B cell (primary cell): ENCODE measurements at regions of chr14 and their contacts with region 1.

Region 1: DNA sequence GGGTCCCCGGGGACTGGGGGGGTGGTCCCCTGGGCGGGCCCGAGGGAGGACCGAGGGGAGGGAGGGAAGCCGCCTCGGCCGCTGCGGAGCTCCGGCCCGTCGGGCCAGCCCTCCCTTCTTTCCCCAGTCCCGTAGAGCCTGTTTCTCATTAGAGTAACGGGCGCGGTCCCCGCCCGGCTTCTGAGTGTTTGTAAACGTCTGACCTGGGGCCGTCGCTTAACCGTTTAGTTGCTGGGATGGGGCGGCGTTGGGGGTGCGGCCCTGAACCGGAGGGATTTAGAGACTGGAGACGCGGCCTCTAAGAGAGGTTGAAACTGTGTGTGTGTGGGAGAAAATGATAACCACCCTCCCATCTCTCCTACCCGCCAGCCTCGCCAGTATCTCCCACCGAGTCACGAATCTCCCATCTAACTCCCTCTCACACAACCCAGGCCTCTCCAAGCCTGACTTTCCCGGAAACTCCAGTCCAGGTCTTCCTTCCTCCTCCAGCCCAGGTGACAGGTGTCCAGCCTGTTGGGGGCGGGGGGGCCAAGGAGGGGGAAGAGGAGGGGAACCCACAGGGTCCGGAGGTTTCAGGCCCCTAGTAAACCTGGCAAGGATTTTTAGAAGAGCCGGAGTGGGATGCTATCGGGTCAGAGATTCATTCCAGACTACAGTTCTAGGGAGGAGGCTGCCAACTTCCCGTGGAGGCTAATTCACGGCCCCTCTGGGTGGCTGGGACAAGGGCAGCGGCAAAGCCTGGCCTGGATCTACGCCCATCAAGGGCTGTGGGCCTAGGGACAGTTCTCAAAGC is 1.1 kb upstream of the NFATC4 start:
- DNase-seq: peak; percentile 94
- ATAC-seq: peak; percentile 85
- H3K4me3 ChIP-seq: peak overlapping the region in 4 of 5 experiments; percentile 52 to 64 (median 60)
- H3K4me3 Mint-ChIP-seq: peak overlapping the region; percentile 92
- H3K27ac ChIP-seq: peak overlapping the region; percentile 59 to 70
- H3K27ac Mint-ChIP-seq: peak overlapping the region; percentile 92
- H3K4me1 ChIP-seq: peaks cover 30 to 39% of the 10 kb centered on the region in 2 donors
- H3K4me1 Mint-ChIP-seq: peaks cover 32% of the 10 kb centered on the region
- H3K27me3 ChIP-seq: peaks cover 0 to 32% (median 6%) of the 10 kb centered on the region in 4 experiments
- H3K27me3 Mint-ChIP-seq: peaks cover 10% of the 10 kb centered on the region
- CTCF ChIP-seq: no peak

Region 2: GRCh38 chr14:23539248-23540140 is 827.4 kb before region 1 on chr14:
- CTCF ChIA-PET with region 1: no interaction called
- POLR2A ChIA-PET with region 1: no interaction called
- intact Hi-C with region 1: no loop called
- DNase-seq: peak; percentile 55
- ATAC-seq: peak; percentile 74
- H3K4me3 ChIP-seq: no peak overlapping the region
- H3K4me3 Mint-ChIP-seq: no peak overlapping the region
- H3K27ac ChIP-seq: no peak overlapping the region
- H3K27ac Mint-ChIP-seq: no peak overlapping the region
- H3K4me1 ChIP-seq: no peaks in the 10 kb centered on the region
- H3K4me1 Mint-ChIP-seq: no peaks in the 10 kb centered on the region
- H3K27me3 ChIP-seq: peaks cover 0 to 5% (median 0%) of the 10 kb centered on the region in 4 experiments
- H3K27me3 Mint-ChIP-seq: peaks cover 3% of the 10 kb centered on the region
- CTCF ChIP-seq: peak; percentile 78

Region 3: GRCh38 chr14:23621204-23621931 is 745.5 kb before region 1 on chr14:
- CTCF ChIA-PET with region 1: no interaction called
- POLR2A ChIA-PET with region 1: no interaction called
- intact Hi-C with region 1: no loop called
- DNase-seq: no peak
- ATAC-seq: no peak
- H3K4me3 ChIP-seq: no peak overlapping the region
- H3K4me3 Mint-ChIP-seq: no peak overlapping the region
- H3K27ac ChIP-seq: no peak overlapping the region
- H3K27ac Mint-ChIP-seq: no peak overlapping the region
- H3K4me1 ChIP-seq: no peaks in the 10 kb centered on the region
- H3K4me1 Mint-ChIP-seq: no peaks in the 10 kb centered on the region
- H3K27me3 ChIP-seq: peaks cover 0 to 3% (median 0%) of the 10 kb centered on the region in 4 experiments
- H3K27me3 Mint-ChIP-seq: peaks cover 30% of the 10 kb centered on the region
- CTCF ChIP-seq: no peak

Region 4: GRCh38 chr14:24141097-24141880 is 225.6 kb before region 1 on chr14 and contains the start of gene EMC9:
- CTCF ChIA-PET with region 1: no interaction called
- POLR2A ChIA-PET with region 1: no interaction called
- intact Hi-C with region 1: loop called (anchors 5 kb)
- DNase-seq: peak; percentile 99
- ATAC-seq: peak; percentile 89
- H3K4me3 ChIP-seq: peak within 1 kb of the TSS; percentile 67 to 93 (median 82)
- H3K4me3 Mint-ChIP-seq: peak within 1 kb of the TSS; percentile 96
- H3K27ac ChIP-seq: peak within 1 kb of the TSS; percentile 63 to 80
- H3K27ac Mint-ChIP-seq: peak within 1 kb of the TSS; percentile 95
- H3K4me1 ChIP-seq: peaks cover 33 to 50% of the 10 kb centered on the region in 2 donors
- H3K4me1 Mint-ChIP-seq: peaks cover 64% of the 10 kb centered on the region
- H3K27me3 ChIP-seq: no peaks in the 10 kb centered on the region
- H3K27me3 Mint-ChIP-seq: no peaks in the 10 kb centered on the region
- CTCF ChIP-seq: peak; percentile 37
- total RNA-seq, gene EMC9: 24.7 and 26.4 TPM in 2 replicates

Region 5: DNA sequence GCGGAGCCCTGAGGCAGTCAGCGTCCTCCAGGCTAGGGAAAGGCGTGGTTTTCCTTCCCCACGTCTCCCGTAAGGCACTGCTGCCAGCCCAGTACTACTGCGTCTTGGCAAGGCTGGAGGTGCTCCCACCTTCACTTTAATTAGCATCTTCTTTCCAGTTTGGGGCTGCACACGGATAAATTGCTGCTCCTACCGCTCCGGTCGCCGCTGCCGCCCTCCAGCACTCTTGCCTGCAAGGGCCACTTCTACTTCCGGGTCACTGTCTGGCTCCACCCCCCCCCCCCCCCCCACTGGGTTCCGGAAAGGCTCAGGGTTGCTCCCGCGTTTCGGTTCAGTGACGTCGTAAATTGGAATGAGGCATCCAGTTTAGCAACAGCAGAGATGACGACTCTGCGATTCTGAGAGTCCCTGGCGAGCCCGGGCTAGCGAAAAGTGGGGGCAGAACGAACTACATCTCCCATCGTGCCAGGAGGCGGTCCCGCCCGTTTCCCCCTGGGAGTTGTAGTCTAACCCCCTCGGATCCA is 134.7 kb before region 1 on chr14 and contains the start of gene NEDD8:
- CTCF ChIA-PET with region 1: no interaction called
- POLR2A ChIA-PET with region 1: no interaction called
- intact Hi-C with region 1: no loop called
- DNase-seq: peak; percentile 95
- ATAC-seq: peak; percentile 86
- H3K4me3 ChIP-seq: peak within 1 kb of the TSS; percentile 75 to 100 (median 97)
- H3K4me3 Mint-ChIP-seq: peak within 1 kb of the TSS; percentile 96
- H3K27ac ChIP-seq: peak within 1 kb of the TSS; percentile 36 to 67
- H3K27ac Mint-ChIP-seq: peak within 1 kb of the TSS; percentile 95
- H3K4me1 ChIP-seq: peaks cover 18 to 24% of the 10 kb centered on the region in 2 donors
- H3K4me1 Mint-ChIP-seq: peaks cover 55% of the 10 kb centered on the region
- H3K27me3 ChIP-seq: no peaks in the 10 kb centered on the region
- H3K27me3 Mint-ChIP-seq: no peaks in the 10 kb centered on the region
- CTCF ChIP-seq: no peak
- total RNA-seq, gene NEDD8: 86.6 and 98.5 TPM in 2 replicates

Region 6: DNA sequence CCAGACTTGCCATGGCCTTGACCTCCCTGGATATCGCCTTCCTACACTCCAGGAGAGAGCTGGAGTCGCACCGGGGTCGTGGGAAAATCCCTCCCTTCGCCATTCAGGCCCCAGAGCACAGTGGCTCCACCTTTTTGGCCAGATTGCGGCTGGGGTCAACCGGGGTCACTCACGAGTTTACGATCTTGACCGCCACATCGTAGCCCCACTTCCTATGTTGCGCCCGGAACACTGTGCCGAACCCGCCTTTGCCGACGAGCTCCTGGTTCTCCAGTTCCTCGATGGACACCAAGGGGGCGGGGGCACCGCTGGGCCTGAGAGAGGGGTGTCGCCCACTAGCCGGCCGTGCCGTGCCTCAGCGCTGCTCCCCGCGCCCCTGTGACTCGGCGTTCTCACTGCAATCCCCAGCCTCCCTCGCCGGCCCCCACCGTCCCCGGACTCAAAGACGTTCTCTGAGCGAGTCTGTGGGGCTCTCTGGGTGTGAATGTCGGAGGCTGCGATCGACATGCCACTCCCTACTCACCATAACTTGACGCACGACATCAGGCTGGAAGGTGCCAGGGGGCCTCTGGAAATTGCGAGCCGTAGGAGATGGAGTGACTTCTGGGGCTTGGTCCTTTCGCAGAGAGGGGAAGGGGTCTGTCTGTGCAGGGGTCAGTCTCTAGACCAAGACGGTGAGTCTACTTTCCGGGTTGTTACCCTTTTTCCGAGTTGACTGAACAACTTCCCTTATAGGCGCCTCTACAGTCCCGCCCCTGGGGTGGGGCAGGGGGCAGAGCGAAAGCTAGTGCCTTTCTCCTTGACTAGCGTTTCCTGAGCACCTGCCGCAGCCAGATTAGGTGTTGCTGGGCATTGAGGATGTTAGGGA is 27.4 kb before region 1 on chr14 and contains the start of gene RIPK3:
- CTCF ChIA-PET with region 1: interaction called, 47 read pairs
- POLR2A ChIA-PET with region 1: interaction called, 5 read pairs
- intact Hi-C with region 1: loop called (anchors 2 kb)
- DNase-seq: peak; percentile 79
- ATAC-seq: peak; percentile 96
- H3K4me3 ChIP-seq: peak within 1 kb of the TSS; percentile 85 to 98 (median 89)
- H3K4me3 Mint-ChIP-seq: peak within 1 kb of the TSS; percentile 99
- H3K27ac ChIP-seq: peak within 1 kb of the TSS; percentile 65 to 73
- H3K27ac Mint-ChIP-seq: peak within 1 kb of the TSS; percentile 98
- H3K4me1 ChIP-seq: peaks cover 25 to 33% of the 10 kb centered on the region in 2 donors
- H3K4me1 Mint-ChIP-seq: peaks cover 32% of the 10 kb centered on the region
- H3K27me3 ChIP-seq: peaks cover 0 to 21% (median 4%) of the 10 kb centered on the region in 4 experiments
- H3K27me3 Mint-ChIP-seq: peaks cover 12% of the 10 kb centered on the region
- CTCF ChIP-seq: no peak
- total RNA-seq, gene RIPK3: 76.6 and 77.6 TPM in 2 replicates

Region 7: GRCh38 chr14:24411443-24412389 is 44.8 kb after region 1 on chr14:
- CTCF ChIA-PET with region 1: interaction called, 55 read pairs
- POLR2A ChIA-PET with region 1: no interaction called
- intact Hi-C with region 1: loop called (anchors 1 kb)
- DNase-seq: peak; percentile 67
- ATAC-seq: peak; percentile 87
- H3K4me3 ChIP-seq: no peak overlapping the region
- H3K4me3 Mint-ChIP-seq: no peak overlapping the region
- H3K27ac ChIP-seq: no peak overlapping the region
- H3K27ac Mint-ChIP-seq: no peak overlapping the region
- H3K4me1 ChIP-seq: no peaks in the 10 kb centered on the region
- H3K4me1 Mint-ChIP-seq: no peaks in the 10 kb centered on the region
- H3K27me3 ChIP-seq: peaks cover 0 to 18% (median 4%) of the 10 kb centered on the region in 4 experiments
- H3K27me3 Mint-ChIP-seq: peaks cover 14% of the 10 kb centered on the region
- CTCF ChIP-seq: peak; percentile 72

Region 8: DNA sequence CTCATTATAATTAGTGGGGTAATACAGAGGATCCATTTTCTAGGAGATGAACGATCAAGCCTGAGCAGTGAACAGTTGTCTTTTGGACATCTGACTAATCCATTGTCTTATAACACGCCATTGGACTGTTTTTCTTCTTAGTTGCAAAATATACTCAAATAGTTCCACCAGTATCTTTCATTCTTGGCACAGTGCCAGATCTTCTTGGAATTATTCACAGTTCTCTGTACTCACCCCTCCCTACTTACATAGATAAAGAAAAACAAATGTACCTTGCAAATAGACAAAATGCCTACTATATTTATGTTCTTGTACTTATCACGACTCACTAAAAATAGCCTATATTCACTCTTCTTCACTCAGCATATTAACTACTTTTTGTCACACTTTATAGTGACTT is 58.8 kb after region 1 on chr14:
- CTCF ChIA-PET with region 1: interaction called, 148 read pairs
- POLR2A ChIA-PET with region 1: interaction called, 78 read pairs
- intact Hi-C with region 1: no loop called
- DNase-seq: no peak
- ATAC-seq: no peak
- H3K4me3 ChIP-seq: no peak overlapping the region
- H3K4me3 Mint-ChIP-seq: no peak overlapping the region
- H3K27ac ChIP-seq: no peak overlapping the region
- H3K27ac Mint-ChIP-seq: no peak overlapping the region
- H3K4me1 ChIP-seq: peaks cover 16 to 30% of the 10 kb centered on the region in 2 donors
- H3K4me1 Mint-ChIP-seq: peaks cover 13% of the 10 kb centered on the region
- H3K27me3 ChIP-seq: peaks cover 0 to 3% (median 0%) of the 10 kb centered on the region in 4 experiments
- H3K27me3 Mint-ChIP-seq: peaks cover 5% of the 10 kb centered on the region
- CTCF ChIP-seq: no peak

Region 9: DNA sequence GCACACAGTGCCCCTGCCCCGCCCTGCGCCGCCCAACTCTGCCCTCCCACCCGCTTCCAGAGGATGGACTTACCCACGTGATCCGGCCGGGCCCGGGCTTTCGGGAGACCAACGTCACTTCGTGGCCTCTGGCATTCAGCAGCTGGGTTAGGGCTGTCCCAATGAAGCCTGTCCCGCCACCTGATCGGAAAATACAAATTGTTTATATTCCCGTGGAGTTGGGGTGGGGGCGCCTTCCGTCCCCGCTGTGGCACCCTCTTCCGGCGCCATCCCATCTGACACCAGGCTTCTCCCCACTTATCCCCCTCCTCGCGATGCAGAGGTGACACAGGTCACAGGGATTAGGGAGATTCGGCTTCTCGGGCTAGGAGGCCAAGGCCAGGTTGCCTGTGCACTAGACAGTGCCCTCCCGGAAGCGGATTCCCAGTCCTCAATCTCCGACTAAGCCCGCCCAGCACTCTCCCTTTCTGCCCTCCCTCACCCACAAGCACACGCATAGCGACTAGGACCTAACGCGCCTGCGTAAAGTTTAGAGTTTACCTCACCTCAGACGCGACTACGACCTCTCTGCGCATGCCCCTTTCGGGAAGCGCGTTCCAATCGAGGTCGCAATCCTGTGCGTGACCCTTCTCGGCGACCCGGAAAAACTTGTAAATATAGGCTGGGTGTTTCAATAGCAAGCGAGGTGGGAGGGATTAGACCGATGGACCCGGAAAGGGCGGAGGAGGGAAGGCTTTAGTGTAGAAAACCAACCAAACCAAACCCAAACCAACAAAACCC is 75.5 kb after region 1 on chr14 and contains the start of gene SDR39U1:
- CTCF ChIA-PET with region 1: interaction called, 49 read pairs
- POLR2A ChIA-PET with region 1: no interaction called
- intact Hi-C with region 1: loop called (anchors 1 kb)
- DNase-seq: peak; percentile 99
- ATAC-seq: peak; percentile 89
- H3K4me3 ChIP-seq: peak within 1 kb of the TSS; percentile 86 to 98 (median 94)
- H3K4me3 Mint-ChIP-seq: peak within 1 kb of the TSS; percentile 97
- H3K27ac ChIP-seq: peak within 1 kb of the TSS; percentile 96
- H3K27ac Mint-ChIP-seq: peak within 1 kb of the TSS; percentile 98
- H3K4me1 ChIP-seq: peaks cover 20 to 29% of the 10 kb centered on the region in 2 donors
- H3K4me1 Mint-ChIP-seq: peaks cover 48% of the 10 kb centered on the region
- H3K27me3 ChIP-seq: no peaks in the 10 kb centered on the region
- H3K27me3 Mint-ChIP-seq: no peaks in the 10 kb centered on the region
- CTCF ChIP-seq: no peak
- total RNA-seq, gene SDR39U1: 107 and 126 TPM in 2 replicates

Region 10: GRCh38 chr14:24678801-24679247 is 311.9 kb after region 1 on chr14:
- CTCF ChIA-PET with region 1: no interaction called
- POLR2A ChIA-PET with region 1: no interaction called
- intact Hi-C with region 1: loop called (anchors 10 kb)
- DNase-seq: peak; percentile 91
- ATAC-seq: peak; percentile 96
- H3K4me3 ChIP-seq: peak overlapping the region; percentile 3 to 58 (median 31)
- H3K4me3 Mint-ChIP-seq: peak overlapping the region; percentile 84
- H3K27ac ChIP-seq: peak overlapping the region in 1 of 2 donors; percentile 7
- H3K27ac Mint-ChIP-seq: peak overlapping the region; percentile 76
- H3K4me1 ChIP-seq: peaks cover 32% of the 10 kb centered on the region in 2 donors
- H3K4me1 Mint-ChIP-seq: peaks cover 49% of the 10 kb centered on the region
- H3K27me3 ChIP-seq: no peaks in the 10 kb centered on the region
- H3K27me3 Mint-ChIP-seq: no peaks in the 10 kb centered on the region
- CTCF ChIP-seq: peak; percentile 100

Region 11: DNA sequence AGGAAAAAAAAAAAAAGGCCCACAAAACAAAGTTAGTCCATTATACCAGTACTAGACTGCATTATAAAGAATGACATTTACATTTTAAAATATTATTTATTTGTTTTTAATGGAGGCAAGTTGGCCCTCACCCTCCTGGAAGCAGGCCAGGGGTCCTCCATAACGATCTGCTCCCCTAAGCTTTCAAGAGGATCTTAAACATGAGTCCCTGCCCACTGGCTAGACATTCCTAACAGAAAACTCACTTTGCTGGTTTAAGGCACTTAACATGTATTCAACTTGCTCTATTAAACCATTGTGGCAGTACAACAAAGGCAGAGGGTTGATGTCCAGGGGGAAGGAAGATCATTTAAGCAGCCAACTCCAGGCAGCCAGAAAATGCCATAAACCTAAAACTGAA is 571.7 kb after region 1 on chr14:
- CTCF ChIA-PET with region 1: no interaction called
- POLR2A ChIA-PET with region 1: no interaction called
- intact Hi-C with region 1: no loop called
- DNase-seq: no peak
- ATAC-seq: no peak
- H3K4me3 ChIP-seq: no peak overlapping the region
- H3K4me3 Mint-ChIP-seq: no peak overlapping the region
- H3K27ac ChIP-seq: no peak overlapping the region
- H3K27ac Mint-ChIP-seq: no peak overlapping the region
- H3K4me1 ChIP-seq: no peaks in the 10 kb centered on the region
- H3K4me1 Mint-ChIP-seq: no peaks in the 10 kb centered on the region
- H3K27me3 ChIP-seq: no peaks in the 10 kb centered on the region
- H3K27me3 Mint-ChIP-seq: no peaks in the 10 kb centered on the region
- CTCF ChIP-seq: no peak